ENCODE measurements at regions of chr3 and their contacts with region 1.

Region 1: DNA sequence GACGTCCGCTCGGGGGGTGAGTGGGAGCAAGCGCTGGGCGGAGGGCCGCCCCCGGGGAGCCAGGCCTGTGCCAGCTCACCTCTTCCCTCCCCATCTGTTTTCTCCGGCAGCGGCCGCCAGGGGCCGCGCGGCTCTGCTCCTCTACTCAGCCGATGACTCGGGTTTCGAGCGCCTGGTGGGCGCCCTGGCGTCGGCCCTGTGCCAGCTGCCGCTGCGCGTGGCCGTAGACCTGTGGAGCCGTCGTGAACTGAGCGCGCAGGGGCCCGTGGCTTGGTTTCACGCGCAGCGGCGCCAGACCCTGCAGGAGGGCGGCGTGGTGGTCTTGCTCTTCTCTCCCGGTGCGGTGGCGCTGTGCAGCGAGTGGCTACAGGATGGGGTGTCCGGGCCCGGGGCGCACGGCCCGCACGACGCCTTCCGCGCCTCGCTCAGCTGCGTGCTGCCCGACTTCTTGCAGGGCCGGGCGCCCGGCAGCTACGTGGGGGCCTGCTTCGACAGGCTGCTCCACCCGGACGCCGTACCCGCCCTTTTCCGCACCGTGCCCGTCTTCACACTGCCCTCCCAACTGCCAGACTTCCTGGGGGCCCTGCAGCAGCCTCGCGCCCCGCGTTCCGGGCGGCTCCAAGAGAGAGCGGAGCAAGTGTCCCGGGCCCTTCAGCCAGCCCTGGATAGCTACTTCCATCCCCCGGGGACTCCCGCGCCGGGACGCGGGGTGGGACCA is 632 bp upstream of the CRELD1 start:
- DNase-seq: peak; percentile 55 to 83
- ATAC-seq: peak; percentile 70 to 71
- H3K4me3 ChIP-seq: peak overlapping the region; percentile 85 to 94 (median 88)
- H3K27ac ChIP-seq: peak overlapping the region; percentile 88 to 97 (median 96)
- H3K4me1 ChIP-seq: peaks cover 27 to 29% of the 10 kb centered on the region in 2 donors
- H3K27me3 ChIP-seq: no peaks in the 10 kb centered on the region
- CTCF ChIP-seq: peak; percentile 78 to 90 (median 89)
- POLR2A ChIP-seq: no peak

Region 2: GRCh38 chr3:9843715-9844438 is 89.1 kb before region 1 on chr3 and contains the start of gene RPUSD3:
- in situ Hi-C with region 1: loop called in 1 of 4 experiments (anchors 10 kb)
- intact Hi-C with region 1: no loop called
- DNase-seq: peak; percentile 97
- ATAC-seq: peak; percentile 98 to 99
- H3K4me3 ChIP-seq: peak within 1 kb of the TSS; percentile 66 to 96 (median 80)
- H3K27ac ChIP-seq: peak within 1 kb of the TSS; percentile 78 to 90 (median 85)
- H3K4me1 ChIP-seq: peaks cover 7 to 12% of the 10 kb centered on the region in 2 donors
- H3K27me3 ChIP-seq: no peaks in the 10 kb centered on the region
- CTCF ChIP-seq: no peak
- POLR2A ChIP-seq: peak; percentile 42 to 63
- total RNA-seq, gene RPUSD3: 72.7 to 96.7 (median 75.5) TPM

Region 3: DNA sequence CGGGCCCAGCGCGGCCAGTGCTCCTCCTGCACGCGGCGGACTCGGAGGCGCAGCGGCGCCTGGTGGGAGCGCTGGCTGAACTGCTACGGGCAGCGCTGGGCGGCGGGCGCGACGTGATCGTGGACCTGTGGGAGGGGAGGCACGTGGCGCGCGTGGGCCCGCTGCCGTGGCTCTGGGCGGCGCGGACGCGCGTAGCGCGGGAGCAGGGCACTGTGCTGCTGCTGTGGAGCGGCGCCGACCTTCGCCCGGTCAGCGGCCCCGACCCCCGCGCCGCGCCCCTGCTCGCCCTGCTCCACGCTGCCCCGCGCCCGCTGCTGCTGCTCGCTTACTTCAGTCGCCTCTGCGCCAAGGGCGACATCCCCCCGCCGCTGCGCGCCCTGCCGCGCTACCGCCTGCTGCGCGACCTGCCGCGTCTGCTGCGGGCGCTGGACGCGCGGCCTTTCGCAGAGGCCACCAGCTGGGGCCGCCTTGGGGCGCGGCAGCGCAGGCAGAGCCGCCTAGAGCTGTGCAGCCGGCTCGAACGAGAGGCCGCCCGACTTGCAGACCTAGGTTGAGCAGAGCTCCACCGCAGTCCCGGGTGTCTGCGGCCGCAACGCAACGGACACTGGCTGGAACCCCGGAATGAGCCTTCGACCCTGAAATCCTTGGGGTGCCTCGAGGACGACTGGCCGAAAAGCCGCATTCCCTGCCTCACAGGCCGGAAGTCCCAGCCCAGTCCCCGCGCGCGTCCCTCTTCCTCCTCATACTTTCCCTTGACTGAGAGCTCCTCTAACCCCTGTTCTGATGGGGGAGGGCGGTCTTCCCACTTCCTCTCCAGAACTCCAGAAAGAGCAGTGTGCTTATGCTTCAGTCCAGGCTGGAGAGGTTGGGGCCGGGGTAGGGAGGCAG is 17.5 kb before region 1 on chr3:
- in situ Hi-C with region 1: no loop called
- intact Hi-C with region 1: no loop called
- DNase-seq: peak; percentile 39 to 57
- ATAC-seq: peak; percentile 39 to 42
- H3K4me3 ChIP-seq: peak overlapping the region; percentile 59 to 85 (median 72)
- H3K27ac ChIP-seq: peak overlapping the region; percentile 85 to 95 (median 92)
- H3K4me1 ChIP-seq: peaks cover 17 to 30% of the 10 kb centered on the region in 2 donors
- H3K27me3 ChIP-seq: no peaks in the 10 kb centered on the region
- CTCF ChIP-seq: peak in 4 of 5 experiments; percentile 31 to 57 (median 44)
- POLR2A ChIP-seq: peak in 1 of 2 donors; percentile 35

Region 4: DNA sequence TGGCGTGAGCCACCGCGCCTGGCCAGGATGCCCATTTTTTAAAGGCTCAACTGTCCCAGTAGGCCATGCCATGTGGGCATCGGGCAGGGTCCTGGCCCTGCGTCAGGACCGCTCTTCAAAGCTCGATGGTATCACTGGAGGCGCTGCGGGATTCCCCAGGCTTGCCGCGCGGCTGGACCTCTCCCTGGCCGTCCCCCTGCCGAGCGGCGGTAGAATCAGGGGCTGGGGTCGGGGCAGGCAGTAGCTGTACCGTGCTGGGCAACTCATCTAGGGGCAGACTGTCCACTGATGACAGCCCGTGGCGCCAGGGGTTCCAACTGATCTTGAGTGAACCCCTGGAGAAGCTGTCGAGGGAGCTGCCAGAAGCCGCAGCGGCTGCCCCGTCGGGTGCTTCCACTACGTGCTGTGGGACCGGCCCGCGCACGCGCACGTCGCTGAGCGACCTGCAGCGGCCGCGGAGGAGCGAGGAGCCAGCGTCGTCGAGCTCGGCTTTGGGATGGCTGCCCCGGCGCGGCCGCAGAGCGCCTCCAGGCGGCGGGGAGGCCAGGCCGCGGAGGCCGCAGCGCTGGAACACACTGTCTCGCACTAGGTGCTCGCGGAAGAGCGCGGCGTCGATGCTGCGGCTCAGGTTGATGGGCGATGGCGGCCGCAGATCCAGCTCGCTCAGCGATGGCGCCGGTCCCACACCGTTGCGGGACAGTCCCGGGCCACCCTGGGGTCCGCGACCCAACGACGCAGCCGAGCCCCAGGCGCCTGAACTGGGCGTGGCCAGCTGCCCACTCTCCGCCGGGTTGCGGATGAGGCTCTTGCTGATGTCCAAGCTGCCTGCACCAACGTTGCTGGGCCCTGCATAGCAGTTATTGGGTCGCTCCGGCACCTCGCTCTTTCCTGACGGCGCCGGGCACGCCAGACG is 13.4 kb after region 1 on chr3:
- in situ Hi-C with region 1: no loop called
- intact Hi-C with region 1: loop called (anchors 1 kb)
- DNase-seq: peak; percentile 67 to 81
- ATAC-seq: peak; percentile 73 to 76
- H3K4me3 ChIP-seq: peak overlapping the region; percentile 62 to 87 (median 80)
- H3K27ac ChIP-seq: peak overlapping the region; percentile 79 to 92 (median 84)
- H3K4me1 ChIP-seq: peaks cover 7 to 16% of the 10 kb centered on the region in 2 donors
- H3K27me3 ChIP-seq: no peaks in the 10 kb centered on the region
- CTCF ChIP-seq: peak; percentile 59 to 78 (median 66)
- POLR2A ChIP-seq: peak; percentile 21 to 41

Region 5: DNA sequence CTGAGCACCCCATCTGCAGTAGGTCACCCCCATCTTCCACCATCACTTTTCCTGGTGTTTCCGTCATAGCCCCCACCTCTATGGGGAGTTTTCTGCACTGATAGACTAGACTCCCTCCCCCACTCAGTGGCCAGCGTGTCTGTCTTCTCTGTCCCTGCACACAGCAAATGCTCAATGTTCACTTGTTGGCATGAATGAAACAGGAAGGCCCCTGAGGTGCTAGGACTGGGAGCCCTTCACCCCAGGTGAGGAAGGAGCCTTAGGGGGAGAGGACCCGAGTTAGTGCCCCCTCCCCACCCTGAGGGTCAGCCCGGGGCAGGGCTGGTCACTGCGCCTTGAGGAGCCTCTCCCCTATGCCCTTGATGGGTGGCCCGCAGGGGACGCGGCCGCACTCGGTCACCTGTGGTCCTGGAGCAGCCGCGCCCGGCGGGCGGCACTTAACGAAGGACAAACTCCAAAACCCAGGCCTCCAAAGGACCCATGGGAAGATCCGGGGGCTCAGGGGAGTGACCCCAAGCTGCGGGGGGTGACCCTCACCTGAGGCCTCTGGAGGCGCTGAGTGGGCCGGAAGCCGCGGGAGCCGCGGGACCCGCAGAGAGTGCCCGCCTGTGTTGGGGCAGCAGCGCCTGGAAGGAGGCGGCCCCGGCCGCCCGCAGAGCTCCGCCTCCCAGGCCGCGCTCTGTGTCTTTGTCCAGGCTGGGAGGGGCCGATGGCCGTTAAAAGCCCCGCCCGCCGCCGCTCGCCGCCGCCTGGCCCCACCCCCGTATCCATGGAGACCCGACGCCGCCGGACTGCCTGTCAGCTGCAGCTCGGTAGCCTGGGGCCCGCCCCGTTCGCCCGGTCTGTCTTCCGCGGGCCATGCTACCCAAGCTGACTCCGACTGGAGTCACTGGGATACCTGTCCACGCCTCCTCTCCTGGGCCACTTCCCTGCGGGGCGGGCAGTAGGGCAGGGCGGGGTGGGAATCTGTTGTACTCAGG is 77.8 kb after region 1 on chr3:
- in situ Hi-C with region 1: no loop called
- intact Hi-C with region 1: loop called (anchors 1 kb)
- DNase-seq: peak; percentile 93 to 96
- ATAC-seq: peak; percentile 73 to 79
- H3K4me3 ChIP-seq: peak overlapping the region; percentile 60 to 87 (median 78)
- H3K27ac ChIP-seq: peak overlapping the region; percentile 53 to 79 (median 76)
- H3K4me1 ChIP-seq: peaks cover 32 to 44% of the 10 kb centered on the region in 2 donors
- H3K27me3 ChIP-seq: no peaks in the 10 kb centered on the region
- CTCF ChIP-seq: no peak
- POLR2A ChIP-seq: peak; percentile 71 to 74

Region 6: DNA sequence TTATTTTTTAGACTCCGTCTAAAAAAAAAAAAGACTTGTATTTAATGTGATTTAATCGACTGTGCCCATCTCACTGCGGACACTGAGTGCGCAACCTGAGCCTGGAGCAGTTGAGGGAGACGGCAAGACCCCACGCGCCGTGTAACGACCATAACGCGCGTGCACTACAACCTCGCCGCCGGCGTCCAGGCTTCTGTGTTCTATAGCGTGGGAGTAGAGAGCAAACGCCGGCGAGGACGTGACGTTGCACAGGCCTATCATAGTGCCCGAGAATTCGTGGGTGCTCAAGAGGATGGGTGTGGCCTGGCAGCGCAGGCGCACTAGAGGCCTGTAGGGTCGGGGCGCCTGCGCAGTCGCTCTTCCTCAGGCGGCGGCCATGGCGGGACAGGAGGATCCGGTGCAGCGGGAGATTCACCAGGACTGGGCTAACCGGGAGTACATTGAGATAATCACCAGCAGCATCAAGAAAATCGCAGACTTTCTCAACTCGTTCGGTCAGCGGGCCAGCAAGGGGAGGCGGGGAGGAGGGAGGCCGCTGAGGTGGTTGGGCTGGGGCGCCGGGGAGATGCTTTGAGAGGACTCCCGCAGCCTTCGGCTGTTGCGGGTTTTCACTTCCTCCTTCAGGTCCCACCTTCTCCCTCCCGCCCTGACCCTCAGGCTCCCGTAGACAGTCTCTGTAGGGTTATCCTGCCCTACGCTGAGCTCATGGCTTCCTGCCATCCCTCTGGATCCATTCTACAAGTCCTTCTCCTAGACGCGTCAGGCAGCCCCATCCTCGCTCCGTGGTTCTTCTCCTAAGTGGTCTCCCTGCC is 182.5 kb after region 1 on chr3 and contains the start of gene BRK1:
- in situ Hi-C with region 1: no loop called
- intact Hi-C with region 1: loop called (anchors 2 kb)
- DNase-seq: peak; percentile 93 to 96
- ATAC-seq: peak; percentile 100
- H3K4me3 ChIP-seq: peak within 1 kb of the TSS; percentile 79 to 97 (median 89)
- H3K27ac ChIP-seq: peak within 1 kb of the TSS; percentile 72 to 89 (median 78)
- H3K4me1 ChIP-seq: peaks cover 15 to 16% of the 10 kb centered on the region in 2 donors
- H3K27me3 ChIP-seq: no peaks in the 10 kb centered on the region
- CTCF ChIP-seq: peak in 2 of 5 experiments; percentile 12 to 13
- POLR2A ChIP-seq: peak; percentile 76 to 85
- total RNA-seq, gene BRK1: 68.2 to 86.8 (median 69.3) TPM

Region 7: DNA sequence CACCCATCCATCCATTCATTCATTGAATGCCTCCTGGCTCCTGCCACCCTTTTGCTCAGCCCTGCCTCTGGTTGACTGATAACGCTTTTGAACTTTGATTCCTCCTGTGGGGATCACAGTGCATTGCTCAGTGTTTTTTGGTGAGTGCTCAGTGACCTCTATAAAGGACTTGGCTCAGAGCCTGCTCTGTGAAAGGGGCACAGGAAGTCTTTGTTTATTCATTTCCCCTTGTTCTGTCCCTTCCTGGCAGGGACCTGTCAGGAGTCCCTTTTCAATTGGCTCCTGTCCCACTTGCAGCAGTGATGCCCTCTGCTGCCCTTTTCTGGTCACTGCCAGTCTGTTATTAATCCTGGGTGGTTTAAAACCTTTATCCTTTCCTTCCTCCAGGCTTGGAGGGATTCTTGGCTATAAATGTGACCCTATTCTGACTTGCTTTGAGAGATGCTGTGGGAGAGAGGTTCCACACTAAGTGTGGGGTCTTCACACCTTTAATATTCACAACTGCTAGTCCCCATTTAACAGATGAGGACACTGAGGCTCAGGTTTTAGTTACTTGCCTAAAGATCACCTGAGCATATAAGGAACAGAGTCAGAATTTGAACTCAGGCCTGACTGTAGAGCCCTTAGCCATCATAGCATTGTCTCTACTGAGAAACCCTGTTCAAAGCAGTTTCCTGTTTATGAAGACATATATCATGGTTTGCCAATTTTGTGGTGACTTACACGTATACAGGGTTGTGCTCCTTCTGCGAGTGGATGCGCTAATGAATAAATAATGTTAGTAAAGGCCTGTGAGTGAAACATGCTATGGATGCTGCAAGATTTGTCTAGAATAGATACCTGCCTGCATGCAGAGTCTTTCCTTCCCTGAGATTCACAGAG is 292.0 kb after region 1 on chr3:
- in situ Hi-C with region 1: no loop called
- intact Hi-C with region 1: loop called (anchors 5 kb)
- DNase-seq: peak; percentile 66 to 81
- ATAC-seq: peak; percentile 89 to 95
- H3K4me3 ChIP-seq: no peak overlapping the region
- H3K27ac ChIP-seq: peak overlapping the region in 3 of 4 donors; percentile 11 to 64 (median 45)
- H3K4me1 ChIP-seq: peaks cover 0 to 5% of the 10 kb centered on the region in 2 donors
- H3K27me3 ChIP-seq: no peaks in the 10 kb centered on the region
- CTCF ChIP-seq: peak; percentile 77 to 90 (median 85)
- POLR2A ChIP-seq: no peak